BJ (cell line): ENCODE measurements at regions of chrX and their contacts with region 1.

Region 1: DNA sequence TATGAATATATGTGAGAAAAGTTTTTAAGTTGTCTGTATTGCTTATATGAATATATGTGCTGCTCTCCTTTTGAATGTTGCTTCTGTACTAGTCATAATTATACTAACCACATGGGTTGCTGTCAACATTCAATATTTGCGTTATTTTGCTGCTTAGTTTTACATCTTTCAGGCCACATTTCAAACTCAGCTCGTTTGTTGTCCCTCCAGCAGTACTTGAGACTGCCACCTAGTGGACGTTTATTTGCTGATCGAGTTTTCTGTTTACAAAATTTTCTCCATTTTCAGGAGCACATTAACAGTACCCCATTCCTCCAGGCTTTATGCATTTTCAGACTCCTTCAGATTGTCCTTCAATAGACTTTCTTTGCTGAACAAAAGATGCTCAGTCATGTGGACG is 75.8 kb downstream of the NUDT11 start:
- DNase-seq: no peak
- H3K4me3 ChIP-seq: no peak overlapping the region
- H3K27me3 ChIP-seq: no peaks in the 10 kb centered on the region
- CTCF ChIP-seq: peak; percentile 58

Region 2: GRCh38 chrX:51336584-51336983 is 84.0 kb before region 1 on chrX:
- CTCF ChIA-PET with region 1: interaction called, 17 read pairs
- POLR2A ChIA-PET with region 1: no interaction called
- DNase-seq: no peak
- H3K4me3 ChIP-seq: no peak overlapping the region
- H3K27me3 ChIP-seq: no peaks in the 10 kb centered on the region
- CTCF ChIP-seq: peak; percentile 59

Region 3: GRCh38 chrX:51461053-51462044 is 40.7 kb after region 1 on chrX:
- CTCF ChIA-PET with region 1: interaction called, 11 read pairs
- POLR2A ChIA-PET with region 1: no interaction called
- DNase-seq: no peak
- H3K4me3 ChIP-seq: no peak overlapping the region
- H3K27me3 ChIP-seq: no peaks in the 10 kb centered on the region
- CTCF ChIP-seq: peak; percentile 64